CD8-positive, alpha-beta T cell (primary cell): ENCODE measurements at regions of chr12 and their contacts with region 1.

Region 1: GRCh38 chr12:53005986-53006809 is at the start of gene EIF4B:
- DNase-seq: peak; percentile 99 to 100 (median 99)
- ATAC-seq: peak; percentile 89
- H3K4me3 ChIP-seq: peak within 1 kb of the TSS; percentile 93 to 99
- H3K4me3 Mint-ChIP-seq: peak within 1 kb of the TSS; percentile 100
- H3K27ac ChIP-seq: peak within 1 kb of the TSS; percentile 80 to 97
- H3K27ac Mint-ChIP-seq: peak within 1 kb of the TSS; percentile 98
- H3K4me1 ChIP-seq: peaks cover 44% of the 10 kb centered on the region
- H3K4me1 Mint-ChIP-seq: peaks cover 48% of the 10 kb centered on the region
- H3K27me3 ChIP-seq: peaks cover 0 to 2% of the 10 kb centered on the region in 2 experiments
- H3K27me3 Mint-ChIP-seq: peaks cover 3% of the 10 kb centered on the region
- CTCF ChIP-seq: no peak
- total RNA-seq, gene EIF4B: 709 to 741 TPM

Region 2: GRCh38 chr12:51238510-51239334 is 1767.5 kb before region 1 on chr12 and contains the start of gene DAZAP2:
- CTCF ChIA-PET with region 1: no interaction called
- POLR2A ChIA-PET with region 1: no interaction called
- intact Hi-C with region 1: loop called in 1 of 2 experiments (anchors 5 kb)
- DNase-seq: peak; percentile 89 to 98 (median 96)
- ATAC-seq: peak; percentile 88
- H3K4me3 ChIP-seq: peak within 1 kb of the TSS; percentile 80 to 99
- H3K4me3 Mint-ChIP-seq: peak within 1 kb of the TSS; percentile 94
- H3K27ac ChIP-seq: peak within 1 kb of the TSS; percentile 97 to 100
- H3K27ac Mint-ChIP-seq: peak within 1 kb of the TSS; percentile 100
- H3K4me1 ChIP-seq: peaks cover 32% of the 10 kb centered on the region
- H3K4me1 Mint-ChIP-seq: peaks cover 45% of the 10 kb centered on the region
- H3K27me3 ChIP-seq: no peaks in the 10 kb centered on the region
- H3K27me3 Mint-ChIP-seq: no peaks in the 10 kb centered on the region
- CTCF ChIP-seq: no peak
- total RNA-seq, gene DAZAP2: 340 to 343 TPM

Region 3: GRCh38 chr12:53054112-53054833 is 48.1 kb after region 1 on chr12:
- CTCF ChIA-PET with region 1: no interaction called
- POLR2A ChIA-PET with region 1: interaction called, 5 read pairs
- intact Hi-C with region 1: loop called in 1 of 2 experiments (anchors 1 kb)
- DNase-seq: peak; percentile 81 to 97 (median 93)
- ATAC-seq: peak; percentile 92
- H3K4me3 ChIP-seq: peak overlapping the region; percentile 82 to 94
- H3K4me3 Mint-ChIP-seq: peak overlapping the region; percentile 94
- H3K27ac ChIP-seq: peak overlapping the region; percentile 51 to 57
- H3K27ac Mint-ChIP-seq: peak overlapping the region; percentile 91
- H3K4me1 ChIP-seq: peaks cover 7% of the 10 kb centered on the region
- H3K4me1 Mint-ChIP-seq: peaks cover 13% of the 10 kb centered on the region
- H3K27me3 ChIP-seq: no peaks in the 10 kb centered on the region
- H3K27me3 Mint-ChIP-seq: no peaks in the 10 kb centered on the region
- CTCF ChIP-seq: no peak

Region 4: DNA sequence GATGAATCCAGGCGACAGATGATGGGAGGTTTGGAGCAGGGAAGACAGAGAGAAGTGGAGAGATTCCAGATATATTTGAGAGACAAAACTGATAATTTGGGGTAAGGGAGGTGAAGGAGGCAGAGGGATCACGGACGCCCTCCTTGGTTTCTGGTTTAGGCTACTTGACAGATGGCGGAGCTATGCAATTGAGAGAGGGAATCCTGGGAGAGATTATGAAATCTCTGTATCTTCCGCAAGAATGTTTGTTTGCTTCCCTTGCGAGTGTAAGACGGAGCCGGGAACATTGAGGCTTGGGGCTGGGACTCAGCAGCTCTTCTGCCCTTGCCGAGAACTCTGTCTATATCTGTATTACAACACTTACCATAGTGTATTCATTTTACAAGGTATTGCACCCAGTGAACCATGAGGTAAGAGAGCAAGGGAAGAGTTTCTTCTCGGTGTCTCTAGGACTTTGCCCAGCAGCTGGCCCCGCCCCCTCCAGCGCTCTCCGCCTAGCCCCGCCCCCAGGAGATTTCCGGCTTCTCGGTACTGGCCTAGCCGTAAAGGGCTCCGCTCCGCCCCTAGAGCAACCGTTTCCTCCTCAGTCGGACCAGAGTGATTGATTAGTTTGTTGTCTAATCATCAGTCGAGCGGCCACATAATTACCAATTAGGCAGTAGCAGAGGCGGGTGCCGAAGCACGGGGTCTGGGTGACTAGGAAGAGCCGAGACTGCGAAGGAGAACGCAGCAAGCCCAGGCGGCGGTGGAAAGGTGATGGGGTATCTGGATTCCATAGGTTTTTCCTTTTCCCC is 435.0 kb after region 1 on chr12 and contains the start of gene PRR13:
- CTCF ChIA-PET with region 1: no interaction called
- POLR2A ChIA-PET with region 1: interaction called, 3 read pairs
- intact Hi-C with region 1: loop called in 1 of 2 experiments (anchors 5 kb)
- DNase-seq: peak; percentile 95 to 99 (median 99)
- ATAC-seq: peak; percentile 95
- H3K4me3 ChIP-seq: peak within 1 kb of the TSS; percentile 86 to 98
- H3K4me3 Mint-ChIP-seq: peak within 1 kb of the TSS; percentile 97
- H3K27ac ChIP-seq: peak within 1 kb of the TSS; percentile 85 to 94
- H3K27ac Mint-ChIP-seq: peak within 1 kb of the TSS; percentile 97
- H3K4me1 ChIP-seq: peaks cover 36% of the 10 kb centered on the region
- H3K4me1 Mint-ChIP-seq: peaks cover 46% of the 10 kb centered on the region
- H3K27me3 ChIP-seq: no peaks in the 10 kb centered on the region
- H3K27me3 Mint-ChIP-seq: no peaks in the 10 kb centered on the region
- CTCF ChIP-seq: no peak
- total RNA-seq, gene PRR13: 131 to 155 TPM

Region 5: DNA sequence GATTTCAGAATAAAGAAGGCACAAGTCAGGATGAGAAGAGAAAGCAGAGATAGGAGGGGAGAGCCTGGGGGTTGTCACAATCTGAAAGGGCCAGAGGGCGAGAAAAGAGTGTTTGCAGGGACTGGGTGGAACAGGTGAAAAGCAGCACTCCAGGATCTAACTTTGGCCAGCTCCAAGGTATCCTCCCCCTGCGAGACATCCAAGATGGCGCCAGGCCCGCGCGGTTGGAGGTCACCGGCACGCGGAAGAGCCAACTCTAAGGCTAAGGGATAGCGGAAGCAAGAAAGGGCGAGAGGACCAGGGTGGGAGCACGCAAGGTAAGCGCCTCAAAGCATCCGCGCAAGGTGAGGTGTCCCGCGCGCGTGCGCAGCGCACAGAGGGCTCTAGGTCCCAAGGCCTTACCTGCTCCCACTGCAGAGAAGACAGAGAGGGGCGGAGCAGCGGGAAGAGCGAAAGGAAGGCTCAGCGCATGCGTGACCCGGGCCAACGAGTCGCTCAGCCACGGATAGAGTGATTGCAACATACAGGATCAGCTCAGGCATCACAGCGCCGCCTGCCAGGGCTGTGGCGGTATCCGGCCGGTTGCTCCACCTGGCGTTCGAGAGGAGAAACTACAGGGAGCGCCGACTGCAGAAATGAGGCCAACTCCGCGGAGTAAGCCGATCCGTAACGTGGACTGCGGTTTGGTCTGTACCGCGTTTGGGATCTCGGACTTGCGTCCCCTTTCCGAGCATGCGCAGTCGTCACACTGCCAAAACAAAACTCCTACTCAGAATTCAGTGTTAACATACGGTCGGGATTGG is 669.7 kb after region 1 on chr12 and contains the start of gene ATP5MC2:
- CTCF ChIA-PET with region 1: no interaction called
- POLR2A ChIA-PET with region 1: no interaction called
- intact Hi-C with region 1: loop called in 1 of 2 experiments (anchors 2 kb)
- DNase-seq: peak; percentile 96 to 99 (median 97)
- ATAC-seq: peak; percentile 90
- H3K4me3 ChIP-seq: peak within 1 kb of the TSS; percentile 67 to 92
- H3K4me3 Mint-ChIP-seq: peak within 1 kb of the TSS; percentile 92
- H3K27ac ChIP-seq: peak within 1 kb of the TSS; percentile 60 to 84
- H3K27ac Mint-ChIP-seq: peak within 1 kb of the TSS; percentile 95
- H3K4me1 ChIP-seq: peaks cover 14% of the 10 kb centered on the region
- H3K4me1 Mint-ChIP-seq: peaks cover 36% of the 10 kb centered on the region
- H3K27me3 ChIP-seq: peaks cover 0 to 16% of the 10 kb centered on the region in 2 experiments
- H3K27me3 Mint-ChIP-seq: peaks cover 16% of the 10 kb centered on the region
- CTCF ChIP-seq: peak; percentile 99
- total RNA-seq, gene ATP5MC2: 220 to 229 TPM